Heart left ventricle (tissue), 16 donors: ENCODE measurements at regions of chr12 and their contacts with region 1.

Region 1: DNA sequence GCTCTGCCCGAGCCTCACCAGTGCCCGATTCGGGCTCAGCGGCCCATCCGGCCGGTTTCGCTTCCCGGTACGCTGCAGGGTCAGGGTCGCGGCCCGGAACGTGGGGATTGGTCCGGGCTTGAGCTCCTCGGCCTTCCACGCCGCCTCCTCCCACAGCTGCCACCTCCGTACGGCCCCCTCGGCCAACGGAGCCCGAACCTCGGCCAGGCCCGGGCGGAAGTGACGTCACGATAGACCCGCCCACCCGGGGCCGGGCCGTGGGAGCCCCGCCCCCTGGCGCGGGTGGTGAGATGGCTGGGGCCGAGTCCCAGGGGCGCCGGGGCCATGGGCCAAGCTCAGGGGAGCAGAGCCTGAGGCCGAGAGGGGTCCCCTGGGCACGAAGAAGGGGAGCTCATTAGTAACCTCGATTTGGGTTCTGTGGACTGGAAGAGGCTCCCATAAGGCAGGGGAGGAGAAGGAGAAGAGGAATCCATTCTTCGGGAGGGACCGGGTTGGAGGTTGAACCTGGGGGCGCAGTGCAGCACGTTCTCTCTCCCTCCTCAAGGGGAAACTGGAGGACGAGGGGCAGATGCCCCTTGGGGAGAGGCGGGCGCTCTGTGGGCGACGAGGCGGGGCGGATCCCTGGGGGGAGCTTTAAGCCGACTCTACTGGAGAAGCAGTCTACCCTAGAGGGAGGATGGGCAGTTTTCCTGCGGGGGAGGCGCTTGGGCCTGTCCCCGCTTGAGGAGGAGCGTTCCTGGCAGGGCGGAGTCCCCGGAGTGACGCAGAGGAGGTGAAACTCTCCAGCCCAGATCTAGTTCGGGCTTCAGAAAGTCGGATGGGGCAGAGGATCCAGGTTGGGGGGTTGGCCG is at the start of gene MLF2:
- DNase-seq: peak; percentile 99
- ATAC-seq: peak; percentile 95 to 99 (median 98)
- H3K4me3 ChIP-seq: peak within 1 kb of the TSS; percentile 70 to 100 (median 84)
- H3K27ac ChIP-seq: peak within 1 kb of the TSS; percentile 94 to 100 (median 99)
- H3K4me1 ChIP-seq: peaks cover 0 to 44% (median 15%) of the 10 kb centered on the region in 12 donors
- H3K27me3 ChIP-seq: no peaks in the 10 kb centered on the region
- CTCF ChIP-seq: peak in 9 of 12 donors; percentile 94 to 99 (median 97)
- POLR2A ChIP-seq: peak; percentile 81 to 90
- total RNA-seq, gene MLF2: 126 to 207 (median 152) TPM

Region 2: DNA sequence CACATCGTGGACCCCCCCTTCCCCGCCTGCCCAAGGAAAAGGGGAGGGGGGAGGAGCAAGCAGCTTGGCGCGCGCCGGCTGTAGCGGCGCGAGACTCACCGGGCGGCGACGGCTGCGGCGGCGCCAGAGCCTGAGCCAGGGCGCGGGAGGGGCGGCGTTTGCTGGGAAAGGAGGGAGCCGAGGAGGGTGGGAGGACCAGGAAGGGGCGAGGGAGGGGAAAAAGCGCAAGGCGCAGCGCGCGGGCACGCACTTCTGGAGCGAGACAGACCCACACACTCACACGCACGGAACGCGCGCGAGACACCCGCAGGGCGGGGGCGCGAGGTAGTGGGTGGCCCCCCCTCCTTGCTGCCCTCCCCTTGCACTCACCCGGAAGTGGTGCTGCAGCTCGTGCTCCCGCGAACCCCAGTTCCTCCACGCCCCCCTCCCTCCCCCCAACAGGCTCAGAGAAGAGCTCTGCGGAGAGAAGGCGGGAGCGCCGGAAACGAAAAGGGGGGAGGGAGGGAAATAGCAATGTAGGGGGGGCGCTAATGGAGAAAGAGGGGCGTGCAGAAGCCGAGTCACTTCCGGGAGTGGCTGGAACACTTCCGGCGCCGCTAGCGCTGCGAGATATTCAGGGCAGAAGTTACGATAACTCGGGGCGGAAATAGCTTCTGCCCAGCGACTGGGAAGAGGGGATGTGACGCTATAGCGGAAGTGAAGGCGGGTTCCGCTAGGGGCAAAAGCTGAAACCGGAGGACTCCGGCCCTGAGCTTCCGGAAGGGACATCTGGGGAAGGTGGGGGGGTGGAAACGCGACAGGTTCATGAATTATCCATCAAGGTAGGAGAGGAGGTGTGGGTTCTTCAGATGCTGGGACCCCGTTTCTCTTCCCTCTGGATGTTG is 63.9 kb before region 1 on chr12 and contains the start of gene ZNF384:
- intact Hi-C with region 1: loop called in 1 of 10 experiments (anchors 2 kb)
- DNase-seq: peak; percentile 97 to 99 (median 98)
- ATAC-seq: peak; percentile 92 to 97 (median 94)
- H3K4me3 ChIP-seq: peak within 1 kb of the TSS; percentile 67 to 100 (median 88)
- H3K27ac ChIP-seq: peak within 1 kb of the TSS; percentile 88 to 100 (median 99)
- H3K4me1 ChIP-seq: peaks cover 0 to 50% (median 33%) of the 10 kb centered on the region in 12 donors
- H3K27me3 ChIP-seq: no peaks in the 10 kb centered on the region
- CTCF ChIP-seq: peak in 5 of 12 donors; percentile 8 to 37 (median 21)
- POLR2A ChIP-seq: peak in 1 of 2 donors; percentile 58
- total RNA-seq, gene ZNF384: 19.4 to 38.1 (median 25.2) TPM

Region 3: GRCh38 chr12:6723607-6724396 is 29.3 kb before region 1 on chr12 and contains the start of gene COPS7A:
- intact Hi-C with region 1: loop called in 1 of 10 experiments (anchors 2 kb)
- DNase-seq: peak; percentile 98 to 99 (median 99)
- ATAC-seq: peak; percentile 98 to 99 (median 99)
- H3K4me3 ChIP-seq: peak within 1 kb of the TSS; percentile 37 to 84 (median 66)
- H3K27ac ChIP-seq: peak within 1 kb of the TSS; percentile 68 to 95 (median 90)
- H3K4me1 ChIP-seq: peaks cover 0 to 23% (median 11%) of the 10 kb centered on the region in 12 donors
- H3K27me3 ChIP-seq: no peaks in the 10 kb centered on the region
- CTCF ChIP-seq: peak in 3 of 12 donors; percentile 8 to 18 (median 9)
- POLR2A ChIP-seq: peak in 1 of 2 donors; percentile 58
- total RNA-seq, gene COPS7A: 56.7 to 96.4 (median 82.6) TPM

Region 4: DNA sequence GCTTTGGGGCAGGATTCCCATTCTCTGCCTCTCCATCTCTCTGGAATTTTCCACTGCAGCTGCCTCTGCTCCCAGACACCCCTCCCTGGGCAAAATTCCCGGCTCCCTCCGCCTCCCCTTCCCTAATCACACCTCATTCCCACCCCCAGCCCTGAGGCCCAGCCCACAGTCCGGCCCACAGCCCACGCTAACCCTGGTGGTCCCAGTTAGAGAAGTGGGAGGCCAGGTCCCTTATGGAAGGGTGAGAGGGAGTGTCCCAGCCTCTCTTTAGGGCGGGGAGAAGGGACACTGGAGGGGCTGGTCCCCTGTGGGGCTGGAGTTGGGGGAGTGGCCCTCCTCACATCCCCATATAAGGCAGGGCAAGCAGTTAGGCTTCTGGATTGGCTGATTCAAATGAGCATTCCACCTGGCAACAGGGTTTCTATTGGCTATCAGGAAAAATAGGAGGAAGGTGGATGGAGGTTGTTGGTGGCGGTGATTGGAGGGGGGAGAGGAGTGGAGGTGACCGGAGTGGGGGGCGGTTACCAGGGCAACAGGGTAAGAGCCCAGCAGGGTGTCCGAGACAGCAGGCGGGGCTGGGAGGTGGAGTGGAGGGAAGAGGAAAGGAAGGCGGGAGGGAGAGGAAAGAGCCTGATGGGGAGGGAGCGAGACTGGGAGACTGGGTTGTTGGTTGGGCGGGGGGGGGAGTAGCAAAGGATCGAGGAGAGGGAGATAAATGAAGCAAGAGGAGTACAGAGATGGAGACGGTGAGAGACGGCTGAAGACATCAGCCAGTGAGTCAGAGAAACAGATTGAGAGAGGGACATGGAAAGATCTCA is 11.1 kb after region 1 on chr12:
- intact Hi-C with region 1: loop called in 5 of 10 experiments (anchors 1 to 2 kb)
- DNase-seq: peak; percentile 94 to 97 (median 95)
- ATAC-seq: peak; percentile 86 to 91 (median 88)
- H3K4me3 ChIP-seq: peak overlapping the region in 11 of 12 donors; percentile 7 to 100 (median 41)
- H3K27ac ChIP-seq: peak overlapping the region; percentile 80 to 99 (median 94)
- H3K4me1 ChIP-seq: peaks cover 4 to 53% (median 39%) of the 10 kb centered on the region in 12 donors
- H3K27me3 ChIP-seq: peaks cover 0 to 4% (median 0%) of the 10 kb centered on the region in 9 donors
- CTCF ChIP-seq: no peak
- POLR2A ChIP-seq: peak in 1 of 2 donors; percentile 42

Region 5: GRCh38 chr12:6778574-6779550 is 25.7 kb after region 1 on chr12:
- intact Hi-C with region 1: loop called in 7 of 10 experiments (anchors 1 to 2 kb)
- DNase-seq: peak; percentile 94 to 96 (median 96)
- ATAC-seq: peak; percentile 93 to 97 (median 97)
- H3K4me3 ChIP-seq: peak overlapping the region in 11 of 12 donors; percentile 23 to 62 (median 47)
- H3K27ac ChIP-seq: peak overlapping the region in 10 of 12 donors; percentile 56 to 82 (median 66)
- H3K4me1 ChIP-seq: peaks cover 0 to 21% (median 14%) of the 10 kb centered on the region in 12 donors
- H3K27me3 ChIP-seq: peaks cover 0 to 21% (median 0%) of the 10 kb centered on the region in 9 donors
- CTCF ChIP-seq: peak; percentile 93 to 99 (median 96)
- POLR2A ChIP-seq: peak in 1 of 2 donors; percentile 27

Region 6: GRCh38 chr12:6825398-6826124 is 72.4 kb after region 1 on chr12:
- intact Hi-C with region 1: loop called in 8 of 10 experiments (anchors 1 to 5 kb)
- DNase-seq: peak; percentile 83 to 92 (median 86)
- ATAC-seq: peak; percentile 58 to 69 (median 60)
- H3K4me3 ChIP-seq: peak overlapping the region in 5 of 12 donors; percentile 5 to 36 (median 24)
- H3K27ac ChIP-seq: no peak overlapping the region
- H3K4me1 ChIP-seq: peaks cover 0 to 55% (median 27%) of the 10 kb centered on the region in 12 donors
- H3K27me3 ChIP-seq: peaks cover 0 to 21% (median 0%) of the 10 kb centered on the region in 9 donors
- CTCF ChIP-seq: peak; percentile 82 to 95 (median 91)
- POLR2A ChIP-seq: no peak

Region 7: GRCh38 chr12:6867413-6868210 is 114.5 kb after region 1 on chr12 and contains the start of gene TPI1:
- intact Hi-C with region 1: loop called in 2 of 10 experiments (anchors 5 kb)
- DNase-seq: peak; percentile 89 to 93 (median 90)
- ATAC-seq: peak; percentile 66 to 87 (median 82)
- H3K4me3 ChIP-seq: peak within 1 kb of the TSS; percentile 77 to 100 (median 98)
- H3K27ac ChIP-seq: peak within 1 kb of the TSS; percentile 96 to 100 (median 99)
- H3K4me1 ChIP-seq: peaks cover 15 to 47% (median 43%) of the 10 kb centered on the region in 12 donors
- H3K27me3 ChIP-seq: no peaks in the 10 kb centered on the region
- CTCF ChIP-seq: peak in 2 of 12 donors; percentile 15 to 23
- POLR2A ChIP-seq: peak; percentile 80 to 99
- total RNA-seq, gene TPI1: 600 to 1,024 (median 730) TPM